GM10248 (cell line): ENCODE measurements at regions of chr10 and their contacts with region 1.

Region 1: GRCh38 chr10:99732033-99732912 is at the starts of genes COX15 and CUTC:
- DNase-seq: peak; percentile 96
- CTCF ChIP-seq: peak; percentile 12

Region 2: DNA sequence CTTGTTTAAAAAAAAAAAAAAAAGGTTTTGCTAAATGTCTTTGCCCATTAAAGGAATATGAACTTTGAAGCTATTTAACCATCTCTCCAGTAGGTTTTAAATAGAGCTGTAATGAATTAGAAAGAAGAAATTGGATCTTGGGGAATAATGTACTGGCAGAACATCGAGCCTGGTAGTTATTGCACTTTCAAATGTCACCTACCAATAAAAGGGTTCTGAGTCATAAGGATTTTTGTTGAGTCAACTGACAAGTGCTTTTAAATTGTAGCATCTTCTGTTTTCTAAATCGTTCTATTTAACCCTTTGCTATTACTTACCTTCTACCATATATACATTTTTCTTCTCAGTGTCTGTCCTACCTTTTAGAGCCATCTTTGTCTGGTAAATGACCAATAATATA is 10.4 kb after region 1 on chr10:
- CTCF ChIA-PET with region 1: interaction called, 13 read pairs
- POLR2A ChIA-PET with region 1: no interaction called
- DNase-seq: no peak
- CTCF ChIP-seq: no peak

Region 3: DNA sequence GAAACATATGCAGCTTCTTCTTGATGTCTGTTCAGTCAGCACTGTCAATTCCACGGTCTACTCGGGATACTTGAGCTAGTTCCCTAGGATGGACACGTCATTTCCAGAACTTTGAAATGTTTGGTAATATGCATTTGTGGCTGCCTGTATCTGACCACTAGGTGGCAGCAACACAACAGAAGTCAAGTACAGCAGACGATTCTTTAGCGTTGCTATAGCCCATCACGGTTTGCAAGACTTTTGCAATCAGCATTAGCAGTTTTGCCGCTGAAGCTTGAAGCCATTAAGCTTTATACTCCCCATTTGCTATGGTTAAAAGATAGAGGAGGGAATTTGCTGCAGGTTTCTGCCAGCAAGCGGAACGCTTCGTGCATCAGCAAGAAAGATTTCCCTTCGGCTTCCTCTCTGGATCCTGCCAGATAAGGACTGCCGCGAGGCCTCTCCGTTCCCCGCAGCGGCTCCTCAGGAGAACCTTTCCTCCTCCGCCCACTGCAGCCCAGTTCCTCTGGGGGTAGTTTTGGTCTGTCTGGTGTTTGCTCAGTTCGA is 113.6 kb after region 1 on chr10:
- CTCF ChIA-PET with region 1: no interaction called
- POLR2A ChIA-PET with region 1: no interaction called
- DNase-seq: peak; percentile 69
- CTCF ChIP-seq: peak; percentile 90